Heart left ventricle (tissue), 16 donors: ENCODE measurements at regions of chr17 and their contacts with region 1.

Region 1: GRCh38 chr17:75109407-75110233 is at the start of gene ARMC7:
- DNase-seq: peak; percentile 90 to 97 (median 92)
- ATAC-seq: peak; percentile 80 to 92 (median 90)
- H3K4me3 ChIP-seq: peak within 1 kb of the TSS; percentile 78 to 98 (median 92)
- H3K27ac ChIP-seq: peak within 1 kb of the TSS in 11 of 12 donors; percentile 66 to 91 (median 81)
- H3K4me1 ChIP-seq: peaks cover 0 to 44% (median 28%) of the 10 kb centered on the region in 12 donors
- H3K27me3 ChIP-seq: no peaks in the 10 kb centered on the region
- CTCF ChIP-seq: peak in 2 of 12 donors; percentile 6 to 21
- POLR2A ChIP-seq: peak in 1 of 2 donors; percentile 88
- total RNA-seq, gene ARMC7: 3.9 to 7.9 (median 5.2) TPM

Region 2: GRCh38 chr17:75036643-75037268 is 72.9 kb before region 1 on chr17:
- intact Hi-C with region 1: no loop called
- DNase-seq: peak; percentile 90 to 94 (median 91)
- ATAC-seq: peak; percentile 24 to 74 (median 56)
- H3K4me3 ChIP-seq: peak overlapping the region in 9 of 12 donors; percentile 17 to 38 (median 29)
- H3K27ac ChIP-seq: peak overlapping the region; percentile 47 to 96 (median 86)
- H3K4me1 ChIP-seq: peaks cover 0 to 50% (median 31%) of the 10 kb centered on the region in 12 donors
- H3K27me3 ChIP-seq: no peaks in the 10 kb centered on the region
- CTCF ChIP-seq: no peak
- POLR2A ChIP-seq: peak in 1 of 2 donors; percentile 27

Region 3: GRCh38 chr17:75069783-75070182 is 39.8 kb before region 1 on chr17:
- intact Hi-C with region 1: loop called in 4 of 10 experiments (anchors 5 kb)
- DNase-seq: no peak
- ATAC-seq: no peak
- H3K4me3 ChIP-seq: no peak overlapping the region
- H3K27ac ChIP-seq: no peak overlapping the region
- H3K4me1 ChIP-seq: peaks cover 0 to 17% (median 6%) of the 10 kb centered on the region in 12 donors
- H3K27me3 ChIP-seq: no peaks in the 10 kb centered on the region
- CTCF ChIP-seq: peak in 5 of 12 donors; percentile 23 to 37 (median 27)
- POLR2A ChIP-seq: no peak

Region 4: DNA sequence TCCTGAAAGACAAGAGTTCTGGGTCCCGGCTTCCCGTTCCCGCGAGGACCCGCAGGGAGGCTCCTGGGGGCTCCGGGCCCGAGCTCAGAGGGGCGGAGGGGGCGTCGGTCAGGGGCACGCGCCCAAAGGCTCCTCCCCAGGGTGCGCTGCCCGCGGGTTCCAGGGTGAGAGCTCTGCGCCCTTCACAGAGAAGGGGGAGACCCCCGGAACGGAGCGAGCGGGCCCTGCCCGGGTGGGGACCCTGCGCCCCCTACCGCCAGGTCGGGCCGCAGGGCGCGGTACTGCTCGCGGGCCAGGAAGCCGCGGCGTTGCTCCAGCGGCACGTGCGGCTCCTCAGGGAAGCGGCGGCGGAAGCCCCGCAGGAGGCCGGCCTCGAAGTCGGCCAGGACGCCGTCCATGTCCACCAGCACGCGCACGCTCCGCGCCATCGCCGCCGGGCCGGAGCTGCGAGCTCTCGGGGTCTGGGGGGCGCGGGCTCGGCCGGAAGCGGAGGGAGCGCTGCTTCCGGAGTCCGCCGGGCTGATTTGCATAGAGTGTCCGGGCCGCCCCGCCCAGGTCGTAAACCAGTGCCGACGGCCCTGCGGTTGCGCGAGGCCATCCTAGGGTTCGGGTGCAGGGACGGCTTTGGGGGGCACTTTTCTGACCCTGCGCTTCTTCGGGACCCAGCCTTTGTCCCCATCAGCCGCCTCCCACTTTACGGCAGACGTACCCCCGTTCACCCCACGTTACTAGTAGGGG is 21.8 kb after region 1 on chr17 and contains the start of gene NT5C:
- intact Hi-C with region 1: loop called in 2 of 10 experiments (anchors 1 to 2 kb)
- DNase-seq: peak; percentile 84 to 90 (median 85)
- ATAC-seq: peak; percentile 79 to 95 (median 93)
- H3K4me3 ChIP-seq: peak within 1 kb of the TSS; percentile 45 to 94 (median 70)
- H3K27ac ChIP-seq: peak within 1 kb of the TSS; percentile 65 to 95 (median 84)
- H3K4me1 ChIP-seq: peaks cover 0 to 20% (median 8%) of the 10 kb centered on the region in 12 donors
- H3K27me3 ChIP-seq: no peaks in the 10 kb centered on the region
- CTCF ChIP-seq: peak; percentile 57 to 89 (median 72)
- POLR2A ChIP-seq: peak in 1 of 2 donors; percentile 63
- total RNA-seq, gene NT5C: 15.9 to 56.0 (median 22.8) TPM

Region 5: DNA sequence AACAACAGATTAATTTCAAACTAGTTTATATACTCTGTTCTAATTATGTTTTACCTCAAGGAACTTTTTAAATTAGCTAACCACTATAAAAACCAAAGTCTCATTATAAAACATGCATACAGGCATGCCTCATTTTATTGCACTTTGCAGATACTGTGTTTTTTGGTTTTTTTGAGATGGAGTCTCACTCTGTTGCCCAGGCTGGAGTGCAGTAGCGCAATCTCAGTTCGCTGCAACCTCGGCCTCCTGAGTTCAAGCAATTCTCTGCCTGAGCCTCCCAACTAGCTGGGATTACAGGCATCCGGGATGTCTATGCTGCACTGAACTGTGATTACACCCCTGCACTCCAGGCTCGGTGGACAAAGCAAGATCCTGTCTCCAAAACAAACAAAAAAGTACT is 53.5 kb after region 1 on chr17:
- intact Hi-C with region 1: no loop called
- DNase-seq: no peak
- ATAC-seq: no peak
- H3K4me3 ChIP-seq: no peak overlapping the region
- H3K27ac ChIP-seq: no peak overlapping the region
- H3K4me1 ChIP-seq: no peaks in the 10 kb centered on the region
- H3K27me3 ChIP-seq: no peaks in the 10 kb centered on the region
- CTCF ChIP-seq: no peak
- POLR2A ChIP-seq: no peak

Region 6: DNA sequence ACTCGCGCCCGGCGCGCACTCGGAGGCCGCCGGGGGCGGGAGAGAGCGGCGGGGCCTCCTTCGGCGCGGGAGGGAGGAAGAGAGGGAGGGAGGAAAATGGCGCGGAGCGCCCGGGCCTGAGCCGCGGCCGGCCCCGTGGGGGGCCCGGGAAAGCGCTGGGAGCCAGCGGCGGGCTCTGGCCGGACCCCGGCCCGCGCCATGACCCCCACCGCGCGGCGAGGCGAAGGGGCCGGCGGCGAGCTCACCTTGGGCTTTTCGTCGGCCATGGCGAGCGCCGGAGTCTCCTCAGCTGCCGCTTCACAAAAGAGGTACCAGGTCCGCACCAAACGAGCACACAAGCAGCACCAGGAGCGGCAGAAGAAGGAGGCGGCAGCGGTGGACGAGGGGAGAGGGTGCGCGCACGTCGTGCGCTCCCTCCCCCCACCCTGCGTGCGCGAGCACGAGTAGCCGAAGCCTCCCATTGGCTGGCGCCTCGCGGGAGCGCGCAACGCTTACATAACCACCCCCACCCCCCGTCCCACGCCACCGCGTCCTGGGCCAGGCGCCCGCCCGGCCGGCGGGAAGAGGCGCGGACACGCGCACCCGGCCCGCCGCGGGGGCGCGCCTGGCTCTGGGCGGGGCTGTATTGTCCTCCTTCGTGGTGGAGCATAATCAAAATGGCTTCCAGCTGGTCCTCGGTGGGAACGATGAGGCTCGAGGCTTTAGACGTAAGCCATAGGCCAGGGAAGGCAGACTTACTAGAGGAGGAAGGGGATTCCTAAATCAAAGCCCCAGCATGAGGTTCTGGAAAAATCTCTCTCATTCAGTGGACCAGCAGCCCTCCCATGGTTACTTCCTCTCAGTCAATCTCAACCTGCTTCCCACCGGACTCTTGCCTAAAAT is 73.2 kb after region 1 on chr17 and contains the start of gene SUMO2:
- intact Hi-C with region 1: loop called in 2 of 10 experiments (anchors 5 to 10 kb)
- DNase-seq: peak; percentile 95 to 98 (median 96)
- ATAC-seq: peak; percentile 91 to 96 (median 96)
- H3K4me3 ChIP-seq: peak within 1 kb of the TSS; percentile 62 to 98 (median 90)
- H3K27ac ChIP-seq: peak within 1 kb of the TSS; percentile 94 to 100 (median 100)
- H3K4me1 ChIP-seq: peaks cover 0 to 37% (median 23%) of the 10 kb centered on the region in 12 donors
- H3K27me3 ChIP-seq: no peaks in the 10 kb centered on the region
- CTCF ChIP-seq: peak in 6 of 12 donors; percentile 24 to 54 (median 32)
- POLR2A ChIP-seq: peak in 1 of 2 donors; percentile 70
- total RNA-seq, gene SUMO2: 50.1 to 277 (median 207) TPM

Region 7: GRCh38 chr17:75205037-75205792 is 95.6 kb after region 1 on chr17 and contains the start of gene NUP85:
- intact Hi-C with region 1: loop called in 8 of 10 experiments (anchors 1 to 10 kb)
- DNase-seq: peak; percentile 95 to 97 (median 96)
- ATAC-seq: peak; percentile 94 to 98 (median 98)
- H3K4me3 ChIP-seq: peak within 1 kb of the TSS; percentile 63 to 99 (median 88)
- H3K27ac ChIP-seq: peak within 1 kb of the TSS; percentile 83 to 99 (median 96)
- H3K4me1 ChIP-seq: peaks cover 0 to 29% (median 19%) of the 10 kb centered on the region in 12 donors
- H3K27me3 ChIP-seq: no peaks in the 10 kb centered on the region
- CTCF ChIP-seq: no peak
- POLR2A ChIP-seq: peak in 1 of 2 donors; percentile 67
- total RNA-seq, gene NUP85: 9.4 to 40.9 (median 21.5) TPM

Region 8: GRCh38 chr17:75225016-75225415 is 115.4 kb after region 1 on chr17:
- intact Hi-C with region 1: no loop called
- DNase-seq: no peak
- ATAC-seq: no peak
- H3K4me3 ChIP-seq: no peak overlapping the region
- H3K27ac ChIP-seq: no peak overlapping the region
- H3K4me1 ChIP-seq: peaks cover 0 to 27% (median 0%) of the 10 kb centered on the region in 12 donors
- H3K27me3 ChIP-seq: no peaks in the 10 kb centered on the region
- CTCF ChIP-seq: no peak
- POLR2A ChIP-seq: no peak

Region 9: GRCh38 chr17:75412455-75413317 is 303.1 kb after region 1 on chr17:
- intact Hi-C with region 1: loop called in 2 of 10 experiments (anchors 5 to 10 kb)
- DNase-seq: peak in 3 of 5 donors; percentile 39 to 50 (median 46)
- ATAC-seq: peak; percentile 21 to 67 (median 53)
- H3K4me3 ChIP-seq: peak overlapping the region in 7 of 12 donors; percentile 4 to 32 (median 10)
- H3K27ac ChIP-seq: no peak overlapping the region
- H3K4me1 ChIP-seq: peaks cover 0 to 14% (median 1%) of the 10 kb centered on the region in 12 donors
- H3K27me3 ChIP-seq: no peaks in the 10 kb centered on the region
- CTCF ChIP-seq: peak; percentile 65 to 90 (median 78)
- POLR2A ChIP-seq: no peak